Mammary epithelial cell (primary cell): ENCODE measurements at regions of chr3 and their contacts with region 1.

Region 1: DNA sequence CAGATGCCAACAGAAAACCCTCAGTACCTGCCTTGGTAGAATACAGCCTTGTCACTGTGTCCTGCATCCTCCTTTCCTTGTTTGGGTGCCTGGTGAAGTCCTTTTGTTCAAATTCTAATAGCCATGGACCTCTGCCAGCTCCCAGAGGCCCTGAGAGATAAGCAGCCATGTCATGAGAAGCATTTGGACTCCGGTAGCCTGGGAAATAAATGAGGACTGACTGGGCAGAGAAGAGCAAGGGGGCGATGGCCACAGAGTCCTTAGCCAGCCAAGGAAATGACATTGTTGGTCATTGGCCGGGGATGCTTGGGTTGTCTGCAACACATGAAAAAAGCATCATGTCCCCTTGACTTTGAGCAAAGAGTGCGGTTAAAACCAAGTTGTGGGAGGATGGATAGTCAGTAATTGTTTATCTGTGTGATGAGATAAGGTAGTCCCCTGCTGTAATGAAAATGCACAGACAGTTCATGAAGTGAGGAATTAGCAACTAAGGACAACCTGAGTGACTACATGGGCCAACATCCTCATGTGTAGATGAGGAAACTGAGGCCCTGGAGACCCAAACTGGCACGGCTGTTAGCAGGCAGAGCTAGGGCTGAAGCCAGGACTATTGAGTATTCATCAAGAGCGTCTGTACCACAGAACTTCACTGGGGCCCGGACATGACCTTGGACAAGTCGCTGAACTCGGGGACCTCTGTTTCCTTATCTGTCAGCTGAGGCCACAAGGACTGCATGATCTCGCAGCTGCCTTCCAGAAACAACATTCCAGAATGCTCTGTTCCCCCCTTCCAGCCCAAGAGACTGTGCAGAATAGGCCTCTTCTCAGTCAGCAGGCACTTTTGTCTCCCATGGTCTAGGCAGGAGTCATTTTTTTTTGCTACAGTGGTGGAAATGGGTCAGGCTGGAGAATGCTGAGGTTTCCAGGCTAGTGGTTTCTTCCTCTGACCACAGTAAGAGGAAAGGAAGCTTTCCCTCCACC is 90.5 kb upstream of the CTDSPL start:
- DNase-seq: no peak
- H3K4me3 ChIP-seq: no peak overlapping the region
- H3K27ac ChIP-seq: no peak overlapping the region
- H3K4me1 ChIP-seq: no peaks in the 10 kb centered on the region
- H3K27me3 ChIP-seq: peaks cover 2% of the 10 kb centered on the region
- CTCF ChIP-seq: no peak

Region 2: GRCh38 chr3:37183375-37183841 is 587.8 kb before region 1 on chr3:
- CTCF ChIA-PET with region 1: no interaction called
- dilution Hi-C with region 1: no loop called
- in situ Hi-C with region 1: no loop called
- intact Hi-C with region 1: no loop called
- DNase-seq: peak; percentile 98
- H3K4me3 ChIP-seq: no peak overlapping the region
- H3K27ac ChIP-seq: peak overlapping the region; percentile 95
- H3K4me1 ChIP-seq: peaks cover 55% of the 10 kb centered on the region
- H3K27me3 ChIP-seq: no peaks in the 10 kb centered on the region
- CTCF ChIP-seq: no peak

Region 3: GRCh38 chr3:37580237-37580636 is 191.0 kb before region 1 on chr3:
- CTCF ChIA-PET with region 1: no interaction called
- dilution Hi-C with region 1: no loop called
- in situ Hi-C with region 1: no loop called
- intact Hi-C with region 1: no loop called
- DNase-seq: no peak
- H3K4me3 ChIP-seq: no peak overlapping the region
- H3K27ac ChIP-seq: no peak overlapping the region
- H3K4me1 ChIP-seq: no peaks in the 10 kb centered on the region
- H3K27me3 ChIP-seq: no peaks in the 10 kb centered on the region
- CTCF ChIP-seq: no peak

Region 4: GRCh38 chr3:37686225-37686624 is 85.0 kb before region 1 on chr3:
- CTCF ChIA-PET with region 1: no interaction called
- dilution Hi-C with region 1: no loop called
- in situ Hi-C with region 1: no loop called
- intact Hi-C with region 1: no loop called
- DNase-seq: no peak
- H3K4me3 ChIP-seq: no peak overlapping the region
- H3K27ac ChIP-seq: no peak overlapping the region
- H3K4me1 ChIP-seq: no peaks in the 10 kb centered on the region
- H3K27me3 ChIP-seq: no peaks in the 10 kb centered on the region
- CTCF ChIP-seq: no peak

Region 5: DNA sequence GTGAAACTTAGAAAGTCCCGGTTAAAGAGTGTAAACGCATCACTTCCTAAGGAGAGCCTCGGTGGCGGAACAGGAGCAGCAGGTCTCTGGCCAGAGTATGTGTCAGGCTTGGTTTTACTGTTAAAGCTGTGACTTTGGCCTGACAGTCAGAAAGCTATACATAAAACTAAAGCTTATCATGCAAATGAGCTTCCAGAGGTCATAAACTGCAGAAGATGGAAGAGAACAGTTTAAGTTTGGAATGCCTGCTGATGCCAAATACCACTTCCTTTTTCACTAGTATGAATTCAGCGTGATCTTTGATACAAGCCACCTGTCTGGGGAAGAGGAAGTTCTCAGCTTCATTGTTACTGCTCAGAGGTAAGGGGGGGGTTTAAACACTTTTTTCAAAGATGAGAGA is 34.6 kb before region 1 on chr3:
- CTCF ChIA-PET with region 1: no interaction called
- dilution Hi-C with region 1: loop called (anchors 5 kb)
- in situ Hi-C with region 1: no loop called
- intact Hi-C with region 1: no loop called
- DNase-seq: no peak
- H3K4me3 ChIP-seq: no peak overlapping the region
- H3K27ac ChIP-seq: no peak overlapping the region
- H3K4me1 ChIP-seq: no peaks in the 10 kb centered on the region
- H3K27me3 ChIP-seq: no peaks in the 10 kb centered on the region
- CTCF ChIP-seq: no peak

Region 6: DNA sequence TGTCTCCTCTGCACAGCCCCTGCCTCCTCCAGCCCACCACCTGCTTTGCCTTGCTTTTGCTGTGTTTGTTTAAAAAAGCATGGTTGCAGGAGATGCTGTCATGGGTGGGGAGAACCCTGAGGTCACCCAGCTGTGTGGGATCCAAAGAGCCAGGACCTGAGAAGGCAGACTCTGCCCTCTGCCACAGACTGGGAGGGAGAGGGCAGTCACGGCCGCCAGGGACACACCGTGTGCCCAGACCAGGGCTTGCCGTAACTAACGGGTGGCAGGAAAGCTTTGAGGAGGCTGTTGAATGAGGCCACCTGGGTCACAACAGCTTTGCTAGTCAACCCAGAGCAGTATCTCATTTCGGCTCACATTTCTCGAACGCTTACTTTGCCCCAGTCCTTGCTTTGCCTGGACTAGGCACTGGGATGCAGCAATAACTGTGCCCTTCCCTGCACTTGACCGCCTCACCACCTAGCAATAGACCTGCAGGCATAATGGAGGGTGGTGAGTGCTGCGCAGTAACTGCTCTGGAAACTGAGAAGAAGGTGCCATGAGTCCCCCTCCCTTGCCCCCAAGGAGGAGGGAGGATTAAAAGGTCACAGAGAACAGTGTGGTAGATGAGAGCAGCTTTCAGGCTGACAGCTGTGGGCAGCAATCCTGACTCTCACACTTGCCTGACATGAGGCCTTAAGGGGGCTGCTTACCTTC is 35.4 kb after region 1 on chr3:
- CTCF ChIA-PET with region 1: no interaction called
- dilution Hi-C with region 1: loop called (anchors 5 kb)
- in situ Hi-C with region 1: no loop called
- intact Hi-C with region 1: no loop called
- DNase-seq: no peak
- H3K4me3 ChIP-seq: no peak overlapping the region
- H3K27ac ChIP-seq: no peak overlapping the region
- H3K4me1 ChIP-seq: no peaks in the 10 kb centered on the region
- H3K27me3 ChIP-seq: no peaks in the 10 kb centered on the region
- CTCF ChIP-seq: no peak

Region 7: DNA sequence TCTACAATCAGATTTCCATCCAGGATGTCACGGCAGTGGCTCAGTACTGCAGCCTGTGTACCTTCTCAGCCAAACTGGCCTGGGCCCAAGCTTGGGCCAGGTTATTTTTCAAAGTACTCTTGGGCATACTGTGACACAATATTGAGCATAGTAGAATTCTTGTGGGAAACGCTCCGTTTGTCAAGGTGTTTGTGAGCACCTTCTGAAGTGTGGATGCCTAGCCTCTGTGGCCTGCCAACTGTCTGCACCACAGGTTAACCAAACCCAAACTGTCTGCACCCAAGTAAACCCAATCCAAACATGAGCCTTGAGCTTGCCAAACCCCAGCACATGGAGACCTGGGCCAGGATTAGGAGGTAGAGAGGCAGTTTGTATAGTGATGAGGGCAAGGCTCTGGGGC is 115.8 kb after region 1 on chr3:
- CTCF ChIA-PET with region 1: no interaction called
- dilution Hi-C with region 1: no loop called
- in situ Hi-C with region 1: no loop called
- intact Hi-C with region 1: no loop called
- DNase-seq: no peak
- H3K4me3 ChIP-seq: no peak overlapping the region
- H3K27ac ChIP-seq: no peak overlapping the region
- H3K4me1 ChIP-seq: peaks cover 8% of the 10 kb centered on the region
- H3K27me3 ChIP-seq: no peaks in the 10 kb centered on the region
- CTCF ChIP-seq: no peak